Activated T-helper 1 cell treated with anti-CD3 and anti-CD28 coated beads, Interleukin-12 subunit alpha, Interleukin-12 subunit beta, Interleukin-2, Interleukin-4 antibody, amounts not matched to agents 30 ng/mL and 10 ng/mL and 1 ng/mL, durations not matched to agents 14 hours and 24 hours and 36 hours (primary cell): ENCODE measurements at regions of chr14 and their contacts with region 1.

Region 1: DNA sequence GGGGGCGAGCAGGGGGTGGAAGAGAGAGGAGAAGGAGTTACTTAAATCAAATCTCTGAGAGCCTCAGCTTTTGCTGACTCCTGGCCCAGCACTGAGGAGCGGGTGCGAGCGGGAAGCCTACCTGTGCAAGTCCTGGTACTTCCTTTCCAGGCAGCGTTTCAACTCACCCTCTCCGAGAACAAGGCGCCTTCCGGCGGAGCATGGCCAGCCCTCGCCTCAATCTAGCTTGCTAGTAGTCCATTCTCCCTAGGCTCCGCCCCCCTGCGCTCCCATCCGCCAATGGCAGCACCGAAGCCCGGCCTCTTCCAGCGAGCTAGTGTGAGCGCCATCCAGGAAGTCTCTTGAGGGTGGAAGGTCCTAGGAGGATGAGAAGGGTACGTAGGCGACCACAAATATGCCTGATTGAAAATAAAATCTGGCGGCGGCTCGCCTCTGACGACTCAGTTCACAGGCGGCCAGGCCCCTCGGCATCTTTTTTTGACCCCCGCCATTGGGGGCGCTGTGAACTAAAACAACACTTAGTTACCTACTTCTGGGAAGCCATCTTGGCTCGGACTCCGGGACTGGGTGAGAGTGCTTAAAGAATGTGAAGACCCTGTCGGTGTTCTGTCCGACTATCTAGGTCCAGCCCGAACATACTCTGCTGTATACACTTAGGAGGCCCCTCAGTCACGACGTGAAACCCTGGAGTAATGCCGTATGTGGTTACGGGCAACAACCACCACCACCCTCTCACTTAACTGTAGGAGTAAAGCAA is at the start of gene CHD8:
- DNase-seq: peak; percentile 100
- H3K4me3 Mint-ChIP-seq: peak within 1 kb of the TSS; percentile 96
- H3K27ac Mint-ChIP-seq: peak within 1 kb of the TSS; percentile 95
- H3K4me1 Mint-ChIP-seq: peaks cover 40% of the 10 kb centered on the region
- H3K27me3 Mint-ChIP-seq: no peaks in the 10 kb centered on the region
- total RNA-seq, gene CHD8: 126 and 131 TPM in 2 replicates

Region 2: GRCh38 chr14:20970983-20971704 is 484.9 kb before region 1 on chr14:
- intact Hi-C with region 1: loop called (anchors 1 kb)
- DNase-seq: peak; percentile 72
- H3K4me3 Mint-ChIP-seq: peak overlapping the region; percentile 93
- H3K27ac Mint-ChIP-seq: no peak overlapping the region
- H3K4me1 Mint-ChIP-seq: peaks cover 15% of the 10 kb centered on the region
- H3K27me3 Mint-ChIP-seq: peaks cover 35% of the 10 kb centered on the region

Region 3: DNA sequence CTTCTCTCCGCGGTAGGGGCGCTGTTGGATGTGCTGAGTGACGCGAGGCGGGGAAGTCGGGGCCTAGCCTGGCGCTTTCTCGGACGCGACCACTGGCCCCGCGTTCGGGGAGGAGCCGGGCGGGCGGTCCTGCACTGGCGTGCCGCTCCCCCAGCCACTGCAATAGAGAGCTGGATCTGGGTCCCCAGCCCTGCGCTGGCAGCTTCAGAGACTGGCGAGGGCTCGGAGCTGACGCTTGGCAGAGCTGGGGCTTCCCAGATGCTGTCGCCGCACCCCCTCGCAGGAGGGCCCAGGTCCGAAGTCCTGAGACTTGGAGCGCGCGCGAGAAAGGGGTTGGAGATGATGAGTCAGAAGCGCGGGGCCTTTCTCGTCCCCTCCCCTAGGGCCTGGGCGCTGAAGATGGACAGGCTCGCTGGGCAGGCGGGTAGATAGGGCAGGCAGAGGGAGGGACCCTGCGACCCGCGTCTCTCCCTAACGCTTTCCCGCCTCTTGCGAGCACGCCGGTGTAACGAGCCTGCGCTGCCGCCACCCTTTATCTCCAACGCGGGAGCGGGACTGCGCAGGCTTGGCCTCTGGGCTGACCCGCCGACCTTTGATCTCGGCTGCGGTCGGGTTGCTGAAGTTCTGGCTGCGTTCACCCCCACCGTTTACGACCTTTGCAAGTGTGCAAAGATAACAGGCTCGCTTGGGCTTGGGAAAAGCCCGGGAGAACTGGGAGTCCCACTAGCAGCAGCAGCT is 352.2 kb before region 1 on chr14:
- intact Hi-C with region 1: loop called (anchors 5 kb)
- DNase-seq: peak; percentile 92
- H3K4me3 Mint-ChIP-seq: peak overlapping the region; percentile 93
- H3K27ac Mint-ChIP-seq: peak overlapping the region; percentile 97
- H3K4me1 Mint-ChIP-seq: peaks cover 56% of the 10 kb centered on the region
- H3K27me3 Mint-ChIP-seq: peaks cover 6% of the 10 kb centered on the region

Region 4: GRCh38 chr14:21383848-21384493 is 72.1 kb before region 1 on chr14 and contains the start of gene SUPT16H:
- intact Hi-C with region 1: loop called (anchors 1 kb)
- DNase-seq: peak; percentile 92
- H3K4me3 Mint-ChIP-seq: peak within 1 kb of the TSS; percentile 96
- H3K27ac Mint-ChIP-seq: peak within 1 kb of the TSS; percentile 100
- H3K4me1 Mint-ChIP-seq: peaks cover 40% of the 10 kb centered on the region
- H3K27me3 Mint-ChIP-seq: no peaks in the 10 kb centered on the region
- total RNA-seq, gene SUPT16H: 162 and 166 TPM in 2 replicates

Region 5: DNA sequence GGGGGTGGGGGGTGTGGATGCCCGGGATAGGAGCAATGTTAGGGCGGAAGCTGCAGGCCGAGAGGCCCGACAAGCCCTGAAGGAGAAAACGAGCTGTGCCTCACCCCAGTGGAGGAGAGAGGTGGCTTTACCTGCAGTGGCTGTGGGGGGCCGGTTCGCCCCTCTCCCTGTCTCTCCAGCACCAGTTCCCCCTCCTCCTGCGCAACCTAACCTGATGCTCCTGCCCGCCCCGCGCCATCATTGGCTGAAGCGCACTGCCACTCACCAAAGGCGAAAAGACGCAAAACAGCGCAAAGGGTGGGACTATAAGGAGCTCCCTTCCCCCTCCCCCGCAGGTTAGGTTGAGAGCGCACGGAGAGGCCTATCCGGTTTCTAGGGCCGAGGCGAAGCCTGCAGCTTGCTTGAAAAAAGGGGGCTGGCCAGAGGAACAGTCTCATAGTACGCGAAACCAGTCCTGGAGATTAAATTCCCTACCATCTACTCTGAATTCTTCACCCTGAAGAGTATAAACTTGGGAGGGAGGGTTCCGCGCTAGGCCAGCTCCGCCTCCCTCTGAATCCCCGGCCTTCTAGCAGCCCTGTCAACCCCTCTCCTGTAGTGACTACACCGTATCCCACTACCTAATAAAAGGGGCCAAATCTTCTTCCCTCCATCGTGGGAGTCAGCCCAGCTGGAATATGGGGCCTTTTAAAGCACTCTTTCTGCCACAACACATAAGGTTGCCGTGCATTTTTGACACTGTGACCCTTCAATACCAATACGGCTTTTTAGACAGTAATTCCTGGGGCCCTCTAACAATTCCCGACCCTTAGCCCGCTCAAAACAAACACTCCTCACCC is 18.8 kb before region 1 on chr14:
- intact Hi-C with region 1: loop called (anchors 1 kb)
- DNase-seq: peak; percentile 97
- H3K4me3 Mint-ChIP-seq: peak overlapping the region; percentile 93
- H3K27ac Mint-ChIP-seq: peak overlapping the region; percentile 73
- H3K4me1 Mint-ChIP-seq: peaks cover 67% of the 10 kb centered on the region
- H3K27me3 Mint-ChIP-seq: no peaks in the 10 kb centered on the region

Region 6: DNA sequence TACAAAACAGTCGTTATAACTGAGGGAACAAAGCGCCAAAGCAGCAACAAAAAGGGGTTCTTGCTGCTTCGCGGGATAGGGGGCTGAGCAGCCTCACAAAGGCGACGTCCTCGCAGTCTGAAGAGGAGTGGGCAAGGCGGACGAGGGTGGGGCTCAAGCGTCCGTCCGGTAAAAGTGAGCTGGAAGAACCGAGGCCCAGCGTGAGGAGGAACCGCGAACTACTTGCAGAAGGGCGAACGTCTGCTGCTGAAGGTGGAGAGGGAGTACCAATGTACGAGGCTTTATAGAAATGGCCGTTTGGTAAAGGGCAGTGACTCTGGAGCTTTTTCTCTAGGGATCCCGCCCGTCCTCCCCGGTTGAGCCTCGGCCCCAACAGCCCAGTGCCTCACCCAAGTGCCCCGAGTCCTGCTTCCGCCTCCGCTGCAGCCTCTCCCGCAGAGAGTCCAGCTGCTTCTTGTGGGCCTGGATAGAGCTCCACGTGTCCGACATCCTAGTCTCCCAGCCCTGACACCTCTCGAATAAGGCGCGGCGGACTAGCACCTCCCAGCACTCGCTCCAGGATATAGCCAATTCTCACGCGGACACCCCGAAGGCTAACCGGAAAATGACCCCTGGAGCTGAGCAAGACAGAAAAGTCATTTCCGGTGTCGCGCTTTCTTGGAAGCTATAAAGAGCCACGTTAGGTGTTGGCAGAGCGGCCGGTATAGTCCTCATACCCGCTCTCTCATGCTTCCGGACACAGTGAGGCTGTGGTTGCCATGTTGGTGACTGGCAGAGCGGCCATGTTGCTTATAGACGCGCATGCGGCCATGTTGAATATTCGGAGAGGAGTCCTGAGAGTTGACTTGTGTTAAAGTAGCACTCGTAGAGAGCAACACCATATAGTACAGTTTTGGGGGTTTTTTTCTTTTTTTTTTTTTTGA is 54.9 kb after region 1 on chr14 and contains the start of gene METTL3:
- intact Hi-C with region 1: loop called (anchors 1 kb)
- DNase-seq: peak; percentile 93
- H3K4me3 Mint-ChIP-seq: peak within 1 kb of the TSS; percentile 99
- H3K27ac Mint-ChIP-seq: peak within 1 kb of the TSS; percentile 93
- H3K4me1 Mint-ChIP-seq: peaks cover 27% of the 10 kb centered on the region
- H3K27me3 Mint-ChIP-seq: peaks cover 12% of the 10 kb centered on the region
- total RNA-seq, gene METTL3: 75.1 and 77.7 TPM in 2 replicates

Region 7: DNA sequence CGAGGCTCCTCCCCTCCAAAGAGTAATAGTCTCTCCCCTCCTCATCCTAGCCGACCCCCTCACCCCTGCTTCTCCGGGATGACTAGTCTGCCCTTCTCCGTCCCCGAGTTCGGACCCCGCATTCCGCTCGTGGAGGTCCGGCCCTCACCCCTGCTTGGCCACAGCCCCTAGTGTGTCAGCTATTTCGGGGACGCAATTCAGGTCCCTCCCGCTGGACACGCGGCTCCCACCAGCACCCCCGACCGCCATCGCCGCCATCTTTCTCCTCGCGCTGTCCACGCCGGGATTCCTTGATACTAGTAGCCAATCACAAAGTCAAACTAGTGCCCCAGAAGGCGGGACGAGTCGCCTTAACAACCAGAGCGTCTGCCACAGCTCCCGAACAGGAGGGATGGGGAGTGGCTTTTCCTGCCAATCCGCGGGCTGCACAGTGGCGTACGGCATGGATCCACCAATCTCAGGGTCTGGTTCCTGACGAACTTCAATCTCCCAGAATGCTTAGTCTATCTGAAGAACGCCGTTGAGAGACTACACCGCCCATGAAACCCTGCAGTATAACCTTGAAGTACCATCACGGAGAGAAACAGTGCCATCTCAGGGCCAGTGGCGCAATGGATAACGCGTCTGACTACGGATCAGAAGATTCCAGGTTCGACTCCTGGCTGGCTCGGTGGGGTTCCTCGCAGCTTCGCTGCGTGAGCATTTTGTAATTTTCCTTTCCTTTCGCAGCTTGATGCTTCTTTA is 1473.2 kb after region 1 on chr14 and contains the start of gene PRMT5:
- intact Hi-C with region 1: loop called (anchors 1 kb)
- DNase-seq: peak; percentile 95
- H3K4me3 Mint-ChIP-seq: no peak within 1 kb of the TSS
- H3K27ac Mint-ChIP-seq: no peak within 1 kb of the TSS
- H3K4me1 Mint-ChIP-seq: peaks cover 32% of the 10 kb centered on the region
- H3K27me3 Mint-ChIP-seq: no peaks in the 10 kb centered on the region
- total RNA-seq, gene PRMT5: 174 and 180 TPM in 2 replicates